ENCODE measurements at regions of chr11 and their contacts with region 1.

Region 1: DNA sequence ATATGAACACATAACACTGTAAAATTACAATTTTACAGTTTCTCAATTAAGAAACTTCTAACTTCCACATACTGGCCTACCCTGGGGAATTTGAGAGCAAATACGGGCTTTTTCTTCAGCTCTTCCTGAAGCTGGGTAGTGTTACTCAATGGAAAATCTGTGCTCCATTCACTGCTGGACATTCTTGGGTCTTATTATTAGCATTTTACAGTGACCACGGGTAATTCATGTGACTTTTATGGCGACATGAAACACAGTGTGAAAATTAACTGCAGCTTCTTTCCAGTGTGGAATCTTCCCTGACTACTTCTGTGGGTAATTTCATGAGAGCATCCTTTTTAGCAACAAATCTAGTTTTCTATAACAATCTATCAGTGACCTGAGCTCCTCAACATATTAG is 423.7 kb upstream of the ANO5 start:
- DNase-seq: no peak
- H3K4me3 ChIP-seq: no peak overlapping the region
- H3K27ac ChIP-seq: no peak overlapping the region
- H3K4me1 ChIP-seq: no peaks in the 10 kb centered on the region
- H3K27me3 ChIP-seq: no peaks in the 10 kb centered on the region
- CTCF ChIP-seq: no peak
- POLR2A ChIP-seq: no peak

Region 2: GRCh38 chr11:21687645-21688044 is 81.5 kb before region 1 on chr11:
- intact Hi-C with region 1: no loop called
- DNase-seq: no peak
- H3K4me3 ChIP-seq: no peak overlapping the region
- H3K27ac ChIP-seq: no peak overlapping the region
- H3K4me1 ChIP-seq: no peaks in the 10 kb centered on the region
- H3K27me3 ChIP-seq: no peaks in the 10 kb centered on the region
- CTCF ChIP-seq: no peak
- POLR2A ChIP-seq: no peak

Region 3: DNA sequence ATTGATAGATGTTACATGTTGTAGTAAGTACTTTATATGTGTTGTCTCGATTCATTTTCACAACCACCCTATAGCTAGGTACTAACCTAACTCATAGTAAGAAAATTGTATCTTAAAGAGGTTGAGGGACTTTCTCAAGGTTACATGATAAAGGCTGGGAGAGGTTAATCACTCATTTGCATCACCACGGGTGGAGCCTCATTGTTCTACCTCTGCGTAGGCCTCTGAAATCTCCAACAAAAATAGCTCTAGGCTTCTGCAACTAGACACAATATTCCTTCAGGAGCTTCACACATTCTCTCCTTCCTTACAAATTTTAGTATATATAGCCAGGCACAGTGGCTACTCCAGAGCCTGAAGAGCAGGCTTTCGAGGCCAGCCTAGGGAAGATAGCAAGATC is 14.8 kb after region 1 on chr11:
- intact Hi-C with region 1: no loop called
- DNase-seq: no peak
- H3K4me3 ChIP-seq: no peak overlapping the region
- H3K27ac ChIP-seq: no peak overlapping the region
- H3K4me1 ChIP-seq: no peaks in the 10 kb centered on the region
- H3K27me3 ChIP-seq: no peaks in the 10 kb centered on the region
- CTCF ChIP-seq: no peak
- POLR2A ChIP-seq: no peak

Region 4: DNA sequence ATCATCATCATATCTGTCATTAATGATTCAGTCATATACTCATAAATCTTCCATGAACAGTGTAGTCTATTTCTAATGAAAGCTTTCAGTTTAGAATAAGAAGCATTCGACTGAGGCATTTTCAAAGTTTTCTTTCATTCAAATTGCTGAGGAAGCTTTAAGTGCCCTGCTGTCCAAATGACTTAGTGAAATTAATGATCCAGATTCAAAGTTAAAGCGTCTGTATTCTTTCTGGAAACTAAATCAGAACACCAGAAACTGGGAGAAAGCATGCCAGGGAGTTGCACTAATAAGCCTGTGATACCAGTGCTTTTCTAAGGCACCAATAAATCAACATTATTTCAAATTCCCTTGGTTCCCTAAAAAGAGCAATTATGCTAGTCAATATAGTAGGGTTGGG is 55.9 kb after region 1 on chr11:
- intact Hi-C with region 1: loop called (anchors 10 kb)
- DNase-seq: no peak
- H3K4me3 ChIP-seq: no peak overlapping the region
- H3K27ac ChIP-seq: no peak overlapping the region
- H3K4me1 ChIP-seq: no peaks in the 10 kb centered on the region
- H3K27me3 ChIP-seq: no peaks in the 10 kb centered on the region
- CTCF ChIP-seq: no peak
- POLR2A ChIP-seq: no peak

Measured in breast epithelium (tissue), 4 donors.